ENCODE measurements at regions of chr1 and their contacts with region 1.

Region 1: DNA sequence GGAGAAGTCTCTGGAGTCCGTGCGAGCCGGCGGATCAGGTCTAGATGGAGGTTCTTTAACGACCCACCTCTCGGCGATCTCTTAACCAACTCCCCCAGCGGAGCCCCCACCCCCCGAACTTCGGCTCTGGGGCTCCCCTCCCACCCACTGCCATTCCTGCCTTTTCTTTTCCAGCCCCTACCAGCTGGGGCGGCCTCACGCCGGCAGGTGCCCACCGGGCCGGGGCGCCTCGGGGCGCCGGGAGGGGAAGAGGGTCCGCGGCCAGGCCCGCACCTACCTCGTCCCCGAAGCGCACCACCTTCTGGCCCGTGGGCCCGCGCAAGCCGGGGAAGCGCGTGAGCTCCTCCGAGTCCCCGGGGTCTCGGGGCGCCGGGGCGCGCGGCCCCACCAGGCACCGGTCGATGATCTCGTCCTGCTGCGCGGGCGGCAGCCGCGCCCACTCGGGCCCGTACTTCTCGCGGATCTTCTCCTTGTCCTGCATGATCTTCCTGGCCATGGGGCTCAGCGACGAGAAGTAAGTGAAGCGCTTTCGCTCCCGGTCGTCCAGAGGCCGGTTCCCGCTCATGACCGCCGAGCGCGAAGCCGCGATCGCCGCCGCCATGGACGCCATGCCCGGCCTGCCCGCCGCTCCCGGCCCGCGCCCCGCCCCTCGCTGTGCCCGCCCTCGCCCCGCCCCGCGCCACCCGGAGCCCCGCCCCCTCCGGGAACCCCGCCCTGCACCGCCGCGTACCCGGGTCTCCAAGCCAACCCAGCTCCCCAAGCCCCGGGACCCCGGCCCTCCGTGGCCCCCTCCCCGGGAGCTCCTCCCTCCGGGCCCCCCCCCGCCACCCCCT is at the start of gene C1orf198:
- DNase-seq: peak; percentile 70 to 88 (median 85)
- H3K4me3 ChIP-seq: peak within 1 kb of the TSS; percentile 90
- H3K27ac ChIP-seq: peak within 1 kb of the TSS; percentile 54 to 69
- H3K4me1 ChIP-seq: peaks cover 26% of the 10 kb centered on the region
- H3K27me3 ChIP-seq: no peaks in the 10 kb centered on the region
- CTCF ChIP-seq: no peak
- EP300 ChIP-seq: no peak
- POLR2A ChIP-seq: peak; percentile 47
- total RNA-seq, gene C1orf198: 36.7 to 60.8 (median 43.4) TPM

Region 2: DNA sequence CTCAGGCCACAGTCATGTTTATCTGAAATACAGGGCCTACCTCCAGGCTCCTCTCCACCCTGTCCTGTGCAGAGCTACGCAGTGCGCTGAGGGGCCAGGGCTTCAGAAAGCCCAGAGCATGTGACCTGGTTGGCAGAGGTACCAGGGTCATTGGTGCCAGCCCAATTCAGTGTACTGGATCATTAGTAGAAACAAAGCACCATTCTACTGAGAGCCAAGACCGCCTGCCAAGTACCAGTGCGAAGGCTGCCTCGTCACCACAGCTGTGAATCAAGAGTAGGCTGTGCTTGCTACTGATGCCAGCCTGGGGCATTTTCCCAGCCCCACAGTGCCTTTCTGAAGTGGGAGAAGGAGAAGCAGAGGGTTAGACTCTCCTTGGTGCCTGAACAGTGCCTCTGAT is 61.1 kb before region 1 on chr1:
- intact Hi-C with region 1: loop called in 1 of 4 experiments (anchors 10 kb)
- DNase-seq: no peak
- H3K4me3 ChIP-seq: no peak overlapping the region
- H3K27ac ChIP-seq: no peak overlapping the region
- H3K4me1 ChIP-seq: peaks cover 2% of the 10 kb centered on the region
- H3K27me3 ChIP-seq: no peaks in the 10 kb centered on the region
- CTCF ChIP-seq: no peak
- EP300 ChIP-seq: no peak
- POLR2A ChIP-seq: no peak